Activated CD4-positive, alpha-beta T cell treated with anti-CD3 and anti-CD28 coated beads, Interleukin-2, amount 10 ng/mL, durations not matched to agents 24 days and 14 days (primary cell): ENCODE measurements at regions of chr5 and their contacts with region 1.

Region 1: GRCh38 chr5:66144074-66144833 is at the start of gene SREK1:
- DNase-seq: peak; percentile 96
- H3K4me3 Mint-ChIP-seq: peak within 1 kb of the TSS; percentile 97
- H3K27ac Mint-ChIP-seq: peak within 1 kb of the TSS; percentile 99
- H3K4me1 Mint-ChIP-seq: peaks cover 34% of the 10 kb centered on the region
- H3K27me3 Mint-ChIP-seq: no peaks in the 10 kb centered on the region
- total RNA-seq, gene SREK1: 70.3 and 75.2 TPM in 2 replicates

Region 2: GRCh38 chr5:64768358-64769312 is 1375.6 kb before region 1 on chr5 and contains the starts of genes CWC27 and SREK1IP1:
- intact Hi-C with region 1: loop called (anchors 2 kb)
- DNase-seq: peak; percentile 95
- H3K4me3 Mint-ChIP-seq: peak within 1 kb of the TSS; percentile 97
- H3K27ac Mint-ChIP-seq: peak within 1 kb of the TSS; percentile 94
- H3K4me1 Mint-ChIP-seq: peaks cover 43% of the 10 kb centered on the region
- H3K27me3 Mint-ChIP-seq: no peaks in the 10 kb centered on the region
- total RNA-seq, gene CWC27: 31.8 and 32.4 TPM in 2 replicates
- total RNA-seq, gene SREK1IP1: 31.1 and 34.8 TPM in 2 replicates

Region 3: DNA sequence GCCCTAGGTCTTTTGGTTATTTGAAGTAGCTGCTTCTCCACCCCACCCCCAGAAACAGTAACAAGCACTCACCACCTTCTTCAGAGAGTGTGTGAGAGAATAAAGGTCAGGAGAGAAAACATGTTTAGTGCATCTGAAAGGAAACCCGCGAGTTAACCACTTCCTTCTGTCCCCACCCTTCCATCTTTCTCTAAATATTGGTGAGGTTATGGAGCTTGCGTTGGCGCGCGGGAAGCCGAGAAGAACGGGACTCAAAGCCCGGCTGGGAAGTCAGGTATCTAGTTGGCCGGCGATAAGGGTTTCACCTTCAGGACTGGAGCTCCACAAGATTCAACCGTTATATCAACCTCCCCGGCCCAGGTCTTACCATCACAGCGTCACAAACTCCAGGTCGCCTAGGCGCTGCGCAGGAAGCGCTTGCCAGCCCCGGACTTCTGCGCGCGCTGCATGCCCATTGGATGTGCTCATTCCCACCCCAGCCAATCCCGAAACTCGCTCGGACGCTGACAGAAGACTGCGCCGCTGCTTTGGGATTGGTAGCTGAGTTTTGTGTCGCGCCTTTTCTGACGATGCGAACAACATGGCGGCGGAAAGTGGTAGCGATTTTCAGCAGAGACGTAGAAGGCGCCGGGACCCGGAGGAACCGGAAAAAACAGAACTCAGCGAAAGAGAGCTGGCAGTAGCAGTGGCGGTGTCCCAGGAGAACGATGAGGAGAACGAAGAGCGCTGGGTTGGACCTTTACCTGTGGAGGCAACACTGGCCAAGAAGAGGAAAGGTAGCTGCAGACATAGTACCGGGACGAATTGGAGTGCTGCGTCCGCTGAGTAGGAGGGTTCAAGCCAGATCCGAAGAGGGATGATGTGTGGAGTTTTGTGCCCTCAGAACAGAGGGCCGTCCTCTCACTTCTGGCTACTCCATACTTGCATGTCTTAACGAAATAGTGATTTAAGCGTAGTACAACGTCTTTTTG is 581.2 kb before region 1 on chr5 and contains the starts of genes CENPK and PPWD1:
- intact Hi-C with region 1: loop called (anchors 1 kb)
- DNase-seq: peak; percentile 98
- H3K4me3 Mint-ChIP-seq: peak within 1 kb of the TSS; percentile 91
- H3K27ac Mint-ChIP-seq: peak within 1 kb of the TSS; percentile 96
- H3K4me1 Mint-ChIP-seq: peaks cover 50% of the 10 kb centered on the region
- H3K27me3 Mint-ChIP-seq: no peaks in the 10 kb centered on the region
- total RNA-seq, gene CENPK: 87.8 and 88.8 TPM in 2 replicates
- total RNA-seq, gene PPWD1: 53.9 and 55.6 TPM in 2 replicates

Region 4: DNA sequence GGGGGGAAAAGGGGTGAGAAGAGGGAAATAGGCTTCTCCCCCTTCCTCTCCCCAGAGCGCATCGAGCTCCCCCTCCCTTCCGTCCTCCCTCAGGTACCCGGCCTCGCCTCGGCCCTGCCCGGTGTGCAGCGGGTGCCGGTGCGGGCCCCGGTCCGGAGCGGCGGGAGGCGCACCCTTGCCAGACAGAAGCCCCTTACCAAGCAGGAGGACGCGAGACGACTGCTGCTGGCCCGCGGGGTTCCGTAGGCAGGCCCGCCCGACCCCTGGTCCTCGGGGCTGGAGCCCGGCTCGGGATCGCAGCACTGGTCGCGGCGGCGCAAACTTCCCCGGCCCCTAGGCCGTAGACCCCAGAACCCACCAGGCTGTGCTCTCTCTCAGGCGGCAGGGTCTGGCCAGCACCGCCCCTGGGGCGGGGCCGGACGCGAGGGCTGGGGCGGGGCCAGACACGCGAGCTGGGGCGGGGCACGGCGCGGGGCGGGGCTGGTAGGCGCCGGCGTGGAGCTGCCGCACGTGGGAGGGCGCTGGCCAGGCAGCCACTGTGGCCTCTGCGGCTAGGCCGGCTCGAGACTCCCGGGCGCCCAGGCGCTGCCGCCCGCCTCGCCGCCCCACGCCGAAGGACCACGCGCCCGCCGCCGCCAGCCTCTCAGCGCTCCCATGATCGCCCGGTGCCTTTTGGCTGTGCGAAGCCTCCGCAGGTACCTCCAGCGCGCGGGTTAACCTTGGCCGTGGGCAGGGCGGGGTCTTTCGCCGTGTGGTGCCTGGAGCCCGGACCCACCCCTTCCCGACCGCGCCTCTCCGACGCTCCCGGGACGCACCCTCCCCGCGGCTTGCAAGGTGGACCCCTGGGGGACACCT is 422.3 kb before region 1 on chr5 and contains the starts of genes NLN and SGTB:
- intact Hi-C with region 1: loop called (anchors 2 kb)
- DNase-seq: peak; percentile 96
- H3K4me3 Mint-ChIP-seq: peak within 1 kb of the TSS; percentile 95
- H3K27ac Mint-ChIP-seq: peak within 1 kb of the TSS; percentile 96
- H3K4me1 Mint-ChIP-seq: peaks cover 31% of the 10 kb centered on the region
- H3K27me3 Mint-ChIP-seq: no peaks in the 10 kb centered on the region
- total RNA-seq, gene NLN: 28.0 and 30.7 TPM in 2 replicates
- total RNA-seq, gene SGTB: 10.0 and 10.3 TPM in 2 replicates

Region 5: GRCh38 chr5:65994117-65994786 is 150.0 kb before region 1 on chr5:
- intact Hi-C with region 1: no loop called
- DNase-seq: no peak
- H3K4me3 Mint-ChIP-seq: no peak overlapping the region
- H3K27ac Mint-ChIP-seq: no peak overlapping the region
- H3K4me1 Mint-ChIP-seq: no peaks in the 10 kb centered on the region
- H3K27me3 Mint-ChIP-seq: no peaks in the 10 kb centered on the region

Region 6: GRCh38 chr5:66074901-66075300 is 69.4 kb before region 1 on chr5:
- intact Hi-C with region 1: loop called (anchors 10 kb)
- DNase-seq: no peak
- H3K4me3 Mint-ChIP-seq: no peak overlapping the region
- H3K27ac Mint-ChIP-seq: no peak overlapping the region
- H3K4me1 Mint-ChIP-seq: peaks cover 5% of the 10 kb centered on the region
- H3K27me3 Mint-ChIP-seq: no peaks in the 10 kb centered on the region

Region 7: DNA sequence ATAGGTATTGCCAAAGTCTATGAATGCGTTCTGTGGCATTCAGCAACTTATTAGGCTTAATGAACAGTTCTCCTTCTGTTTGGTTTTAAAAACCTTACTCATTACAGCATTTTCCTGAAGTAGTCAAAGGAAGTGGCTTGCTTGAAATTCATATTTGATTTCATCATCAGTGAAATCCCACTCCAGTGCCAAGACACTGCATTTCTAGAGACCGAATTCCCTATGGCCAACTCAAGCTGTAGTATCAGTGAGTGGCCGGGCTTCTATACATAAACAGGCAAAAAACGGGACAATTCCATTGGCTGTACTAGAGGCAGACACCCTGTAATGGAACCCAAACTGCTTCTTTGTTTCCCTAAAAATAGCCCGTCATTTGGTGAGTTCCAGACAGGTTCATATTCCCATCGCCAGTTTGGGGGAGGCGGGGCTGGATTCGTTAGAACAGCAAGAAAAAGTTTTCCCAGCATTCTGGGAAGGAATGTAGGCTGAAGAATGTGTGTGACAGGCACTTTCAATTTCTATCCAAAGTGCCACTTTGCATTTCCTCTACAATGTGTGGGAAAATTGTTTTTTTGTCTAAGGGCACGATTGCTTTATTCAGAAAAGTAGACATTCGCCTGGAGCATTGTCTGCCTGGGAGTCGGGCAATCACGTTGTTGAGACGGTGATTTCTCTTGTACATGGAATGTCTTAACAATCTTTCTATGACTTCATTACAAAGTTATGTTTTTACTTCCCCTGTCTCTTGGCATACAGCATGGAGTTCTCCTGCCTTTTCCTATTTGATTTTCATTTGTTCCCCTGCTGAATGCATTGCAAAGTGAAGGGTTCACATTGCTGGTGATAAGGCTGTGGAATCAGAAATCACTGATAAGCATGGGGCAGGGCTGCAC is 310.2 kb after region 1 on chr5:
- intact Hi-C with region 1: no loop called
- DNase-seq: no peak
- H3K4me3 Mint-ChIP-seq: no peak overlapping the region
- H3K27ac Mint-ChIP-seq: no peak overlapping the region
- H3K4me1 Mint-ChIP-seq: no peaks in the 10 kb centered on the region
- H3K27me3 Mint-ChIP-seq: no peaks in the 10 kb centered on the region

Region 8: GRCh38 chr5:66828548-66829357 is 684.5 kb after region 1 on chr5:
- intact Hi-C with region 1: loop called (anchors 10 kb)
- DNase-seq: peak; percentile 92
- H3K4me3 Mint-ChIP-seq: peak overlapping the region; percentile 93
- H3K27ac Mint-ChIP-seq: peak overlapping the region; percentile 93
- H3K4me1 Mint-ChIP-seq: peaks cover 56% of the 10 kb centered on the region
- H3K27me3 Mint-ChIP-seq: no peaks in the 10 kb centered on the region